ENCODE measurements at regions of chr5 and their contacts with region 1.

Region 1: GRCh38 chr5:50440651-50441492 is at the start of gene EMB:
- DNase-seq: peak; percentile 27
- ATAC-seq: peak; percentile 97
- H3K4me3 ChIP-seq: peak within 1 kb of the TSS; percentile 74 to 84
- H3K27ac ChIP-seq: peak within 1 kb of the TSS; percentile 95
- H3K4me1 ChIP-seq: peaks cover 4% of the 10 kb centered on the region; the same call in 1 of the 2 replicates
- H3K27me3 ChIP-seq: no peaks in the 10 kb centered on the region
- CTCF ChIP-seq: peak; percentile 43
- total RNA-seq, gene EMB: 65.9 TPM

Region 2: GRCh38 chr5:50401336-50401735 is 39.5 kb before region 1 on chr5:
- CTCF ChIA-PET with region 1: no interaction called
- POLR2A ChIA-PET with region 1: interaction called, 11 read pairs
- in situ Hi-C with region 1: no loop called
- intact Hi-C with region 1: no loop called
- DNase-seq: no peak
- ATAC-seq: no peak
- H3K4me3 ChIP-seq: no peak overlapping the region
- H3K27ac ChIP-seq: no peak overlapping the region
- H3K4me1 ChIP-seq: no peaks in the 10 kb centered on the region
- H3K27me3 ChIP-seq: no peaks in the 10 kb centered on the region
- CTCF ChIP-seq: no peak